A549 (cell line): ENCODE measurements at regions of chr17 and their contacts with region 1.

Region 1: DNA sequence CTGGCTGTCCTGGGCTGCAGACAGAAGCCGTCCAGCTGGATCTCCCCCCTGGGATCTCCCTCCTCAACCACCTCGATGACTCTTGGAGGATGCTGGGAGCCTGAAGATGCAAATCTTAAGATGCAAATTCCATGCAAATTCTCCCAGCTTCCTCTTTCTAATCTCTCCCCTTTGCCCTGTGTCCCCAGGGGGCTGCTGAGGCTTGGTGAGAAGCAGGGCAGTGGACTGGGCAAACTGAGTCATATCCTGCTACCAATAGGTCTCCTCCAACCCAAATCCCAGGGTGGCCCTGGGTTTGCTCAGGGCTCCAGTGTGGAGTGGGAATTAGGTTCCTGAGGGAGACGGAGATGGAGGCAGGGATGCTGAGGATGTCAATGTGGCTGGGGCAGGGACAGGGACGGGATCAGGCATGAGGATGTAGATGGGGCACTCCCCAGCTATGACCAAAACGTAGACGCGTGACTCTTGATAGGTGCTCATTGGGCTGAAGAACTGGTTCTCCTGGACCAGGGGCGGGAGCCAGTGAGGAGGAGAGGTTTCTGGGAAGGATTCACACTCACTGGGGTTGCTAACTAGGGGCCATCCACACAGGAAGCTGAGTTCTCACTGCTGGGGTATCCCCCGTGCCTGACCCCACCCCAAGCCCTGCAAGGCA is 3.6 kb upstream of the ALOX12B start:
- DNase-seq: no peak
- ATAC-seq: no peak
- H3K4me3 ChIP-seq: no peak overlapping the region
- H3K27ac ChIP-seq: no peak overlapping the region
- H3K4me1 ChIP-seq: no peaks in the 10 kb centered on the region
- CTCF ChIP-seq: no peak
- EP300 ChIP-seq: no peak
- POLR2A ChIP-seq: no peak
- RAD21 ChIP-seq: no peak

Region 2: GRCh38 chr17:7922845-7923628 is 168.1 kb before region 1 on chr17:
- CTCF ChIA-PET with region 1: no interaction called
- POLR2A ChIA-PET with region 1: no interaction called
- DNase-seq: peak in 1 of 2 experiments; percentile 31
- ATAC-seq: peak in 1 of 2 experiments; percentile 25; a peak in 2 of 6 replicates
- H3K4me3 ChIP-seq: no peak overlapping the region
- H3K27ac ChIP-seq: no peak overlapping the region
- H3K4me1 ChIP-seq: no peaks in the 10 kb centered on the region
- CTCF ChIP-seq: no peak
- EP300 ChIP-seq: no peak
- POLR2A ChIP-seq: no peak; the same call in 1 of the 2 replicates
- RAD21 ChIP-seq: no peak

Region 3: GRCh38 chr17:8079291-8080207 is 11.6 kb before region 1 on chr17:
- CTCF ChIA-PET with region 1: interaction called, 444 read pairs
- POLR2A ChIA-PET with region 1: interaction called, 3 read pairs
- DNase-seq: peak; percentile 90 to 93
- ATAC-seq: peak; percentile 87 to 92
- H3K4me3 ChIP-seq: peak overlapping the region; percentile 58
- H3K27ac ChIP-seq: peak overlapping the region; percentile 70 to 89
- H3K4me1 ChIP-seq: peaks cover 10% of the 10 kb centered on the region
- CTCF ChIP-seq: peak; percentile 92
- EP300 ChIP-seq: no peak
- POLR2A ChIP-seq: peak; percentile 54
- RAD21 ChIP-seq: peak; percentile 69 to 72

Region 4: GRCh38 chr17:8109661-8110464 is 18.7 kb after region 1 on chr17:
- CTCF ChIA-PET with region 1: interaction called, 1,490 read pairs
- POLR2A ChIA-PET with region 1: no interaction called
- DNase-seq: peak; percentile 66 to 75
- ATAC-seq: peak; percentile 79 to 93
- H3K4me3 ChIP-seq: no peak overlapping the region
- H3K27ac ChIP-seq: no peak overlapping the region
- H3K4me1 ChIP-seq: peaks cover 15% of the 10 kb centered on the region
- CTCF ChIP-seq: peak; percentile 88
- EP300 ChIP-seq: no peak
- POLR2A ChIP-seq: no peak
- RAD21 ChIP-seq: peak; percentile 70 to 77